ENCODE measurements at regions of chr15 and their contacts with region 1.

Region 1: DNA sequence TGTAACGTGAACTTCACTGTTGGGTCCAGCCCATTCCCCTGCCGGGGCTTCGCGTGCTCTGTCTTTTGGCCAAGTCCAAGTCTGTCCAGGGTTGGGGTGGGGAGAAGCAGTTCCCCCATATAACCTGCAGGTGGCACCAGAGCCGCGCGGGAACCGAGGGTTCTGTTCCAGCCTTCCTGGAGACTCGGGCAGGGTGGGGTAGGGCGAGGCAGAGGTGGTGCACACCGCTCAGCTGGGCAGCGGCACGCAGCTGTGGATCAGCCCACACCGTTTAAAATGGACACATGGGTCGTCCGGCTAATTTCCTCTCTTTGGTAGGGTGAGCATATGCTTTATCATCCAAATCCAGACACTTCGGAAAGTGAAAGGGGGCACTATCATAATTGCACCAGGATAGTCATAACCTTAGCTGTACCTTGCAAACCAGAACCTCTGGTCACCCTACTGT is 118.1 kb downstream of the TBC1D2B start:
- DNase-seq: peak; percentile 77
- ATAC-seq: peak; percentile 100
- H3K4me3 ChIP-seq: peak overlapping the region in 2 of 5 experiments; percentile 23 to 36
- H3K4me3 Mint-ChIP-seq: peak overlapping the region; percentile 49
- H3K27ac ChIP-seq: no peak overlapping the region
- H3K27ac Mint-ChIP-seq: no peak overlapping the region
- H3K4me1 ChIP-seq: peaks cover 3 to 6% of the 10 kb centered on the region in 2 donors
- H3K4me1 Mint-ChIP-seq: peaks cover 7% of the 10 kb centered on the region
- H3K27me3 ChIP-seq: peaks cover 0 to 2% (median 0%) of the 10 kb centered on the region in 4 experiments
- H3K27me3 Mint-ChIP-seq: peaks cover 18% of the 10 kb centered on the region
- CTCF ChIP-seq: peak; percentile 96

Region 2: DNA sequence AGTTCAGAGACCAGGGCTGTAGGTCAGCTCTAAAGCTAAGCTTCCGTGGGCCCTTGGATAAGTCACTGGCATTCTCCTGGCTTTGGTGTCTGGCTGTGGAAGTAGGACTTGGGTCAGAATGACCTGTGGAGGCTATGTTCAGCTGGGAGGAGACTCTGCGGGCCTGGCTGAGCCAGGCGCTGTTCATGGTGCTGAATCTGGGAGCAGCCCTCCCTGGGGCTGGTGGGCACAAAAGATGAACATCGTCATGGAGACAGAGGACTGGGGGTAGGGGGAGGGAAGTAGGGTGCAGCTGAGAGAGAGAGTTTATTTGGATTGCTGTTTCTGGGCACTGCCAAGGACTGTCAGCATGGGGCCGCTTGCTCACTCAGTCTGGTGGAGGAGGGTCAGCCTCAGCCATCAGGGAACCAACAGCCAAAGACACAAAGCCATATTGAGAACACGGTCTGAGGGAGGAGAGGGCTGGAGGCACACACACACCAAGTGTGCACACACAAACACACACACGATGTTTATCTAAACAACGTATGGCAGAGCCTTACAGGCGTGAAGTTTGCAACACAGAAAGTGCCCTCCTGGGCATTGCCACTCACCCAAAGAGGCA is 206.1 kb before region 1 on chr15:
- CTCF ChIA-PET with region 1: no interaction called
- POLR2A ChIA-PET with region 1: no interaction called
- intact Hi-C with region 1: no loop called
- DNase-seq: no peak
- ATAC-seq: no peak
- H3K4me3 ChIP-seq: no peak overlapping the region
- H3K4me3 Mint-ChIP-seq: no peak overlapping the region
- H3K27ac ChIP-seq: no peak overlapping the region
- H3K27ac Mint-ChIP-seq: no peak overlapping the region
- H3K4me1 ChIP-seq: no peaks in the 10 kb centered on the region
- H3K4me1 Mint-ChIP-seq: no peaks in the 10 kb centered on the region
- H3K27me3 ChIP-seq: no peaks in the 10 kb centered on the region
- H3K27me3 Mint-ChIP-seq: peaks cover 25% of the 10 kb centered on the region
- CTCF ChIP-seq: no peak

Region 3: DNA sequence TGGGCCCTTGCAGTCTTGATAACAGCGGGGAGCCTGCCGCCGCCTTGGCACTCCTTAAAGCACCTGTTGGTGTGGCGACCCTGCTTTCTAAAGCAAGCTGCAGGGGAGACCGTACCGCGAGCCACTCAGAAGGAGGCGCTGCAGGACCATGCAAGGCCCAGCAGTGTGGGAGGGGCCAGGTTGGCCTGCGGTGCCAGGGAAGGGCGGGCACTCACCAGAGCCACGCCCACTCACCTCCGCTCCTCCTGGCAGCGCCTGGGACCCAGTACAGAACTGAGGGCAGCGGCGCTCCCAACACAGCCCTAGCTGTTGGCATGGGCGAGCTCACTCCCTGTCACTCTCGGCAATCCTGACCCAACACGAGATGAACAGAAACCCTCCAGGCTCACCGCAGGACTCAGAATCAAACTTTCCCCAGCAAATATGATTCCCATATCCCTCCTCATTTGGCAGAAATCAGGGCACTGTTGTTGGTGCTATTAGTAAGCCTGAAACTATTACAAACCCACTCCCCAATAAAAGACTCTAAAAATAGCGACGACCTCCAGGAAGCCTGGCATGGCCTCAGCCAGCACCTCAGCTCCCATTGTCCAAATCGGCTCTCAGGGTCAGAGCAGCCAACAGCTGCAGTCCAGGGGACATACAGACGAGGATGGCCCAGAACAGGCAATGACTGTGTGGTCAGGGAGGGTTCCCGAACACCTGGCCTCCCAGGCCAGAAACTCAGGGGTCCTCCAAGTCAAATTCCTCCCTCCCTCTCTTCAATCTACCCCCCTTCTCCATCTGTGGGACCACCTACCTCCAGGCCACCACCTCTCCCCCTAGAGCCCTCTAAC is 40.9 kb after region 1 on chr15:
- CTCF ChIA-PET with region 1: interaction called, 8 read pairs
- POLR2A ChIA-PET with region 1: no interaction called
- intact Hi-C with region 1: loop called (anchors 2 kb)
- DNase-seq: peak; percentile 71
- ATAC-seq: peak; percentile 98
- H3K4me3 ChIP-seq: no peak overlapping the region
- H3K4me3 Mint-ChIP-seq: no peak overlapping the region
- H3K27ac ChIP-seq: no peak overlapping the region
- H3K27ac Mint-ChIP-seq: peak overlapping the region; percentile 80
- H3K4me1 ChIP-seq: no peaks in the 10 kb centered on the region
- H3K4me1 Mint-ChIP-seq: peaks cover 3% of the 10 kb centered on the region
- H3K27me3 ChIP-seq: no peaks in the 10 kb centered on the region
- H3K27me3 Mint-ChIP-seq: no peaks in the 10 kb centered on the region
- CTCF ChIP-seq: peak; percentile 68

Measured in B cell (primary cell).